Esophagus squamous epithelium (tissue), 5 donors: ENCODE measurements at regions of chr6 and their contacts with region 1.

Region 1: DNA sequence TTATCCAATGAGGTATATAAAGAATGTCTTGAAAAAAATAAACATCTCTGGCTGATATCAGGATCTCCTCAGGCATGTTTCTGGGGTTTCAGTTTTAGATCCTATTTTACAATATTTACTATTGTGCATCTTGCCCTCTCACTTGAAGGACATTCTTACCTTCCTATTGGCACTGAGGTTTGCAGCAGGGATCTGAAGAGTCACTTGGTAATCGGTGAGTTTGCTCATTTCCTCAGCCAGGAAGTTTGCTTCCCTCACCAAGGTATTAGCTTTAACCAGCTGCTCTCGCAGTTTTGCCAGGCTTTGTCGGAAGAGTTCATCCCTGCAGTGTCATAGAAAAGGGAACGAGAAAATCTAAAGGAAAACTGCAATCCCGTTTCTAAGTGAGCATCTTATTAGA is 101.9 kb upstream of the NUP153 start:
- DNase-seq: no peak
- H3K4me3 ChIP-seq: no peak overlapping the region
- H3K27ac ChIP-seq: no peak overlapping the region
- H3K4me1 ChIP-seq: no peaks in the 10 kb centered on the region
- H3K27me3 ChIP-seq: no peaks in the 10 kb centered on the region
- CTCF ChIP-seq: no peak
- POLR2A ChIP-seq: no peak

Region 2: GRCh38 chr6:17178754-17179529 is 629.7 kb before region 1 on chr6:
- intact Hi-C with region 1: loop called (anchors 10 kb)
- DNase-seq: no peak
- H3K4me3 ChIP-seq: no peak overlapping the region
- H3K27ac ChIP-seq: no peak overlapping the region
- H3K4me1 ChIP-seq: no peaks in the 10 kb centered on the region
- H3K27me3 ChIP-seq: no peaks in the 10 kb centered on the region
- CTCF ChIP-seq: no peak
- POLR2A ChIP-seq: no peak

Region 3: DNA sequence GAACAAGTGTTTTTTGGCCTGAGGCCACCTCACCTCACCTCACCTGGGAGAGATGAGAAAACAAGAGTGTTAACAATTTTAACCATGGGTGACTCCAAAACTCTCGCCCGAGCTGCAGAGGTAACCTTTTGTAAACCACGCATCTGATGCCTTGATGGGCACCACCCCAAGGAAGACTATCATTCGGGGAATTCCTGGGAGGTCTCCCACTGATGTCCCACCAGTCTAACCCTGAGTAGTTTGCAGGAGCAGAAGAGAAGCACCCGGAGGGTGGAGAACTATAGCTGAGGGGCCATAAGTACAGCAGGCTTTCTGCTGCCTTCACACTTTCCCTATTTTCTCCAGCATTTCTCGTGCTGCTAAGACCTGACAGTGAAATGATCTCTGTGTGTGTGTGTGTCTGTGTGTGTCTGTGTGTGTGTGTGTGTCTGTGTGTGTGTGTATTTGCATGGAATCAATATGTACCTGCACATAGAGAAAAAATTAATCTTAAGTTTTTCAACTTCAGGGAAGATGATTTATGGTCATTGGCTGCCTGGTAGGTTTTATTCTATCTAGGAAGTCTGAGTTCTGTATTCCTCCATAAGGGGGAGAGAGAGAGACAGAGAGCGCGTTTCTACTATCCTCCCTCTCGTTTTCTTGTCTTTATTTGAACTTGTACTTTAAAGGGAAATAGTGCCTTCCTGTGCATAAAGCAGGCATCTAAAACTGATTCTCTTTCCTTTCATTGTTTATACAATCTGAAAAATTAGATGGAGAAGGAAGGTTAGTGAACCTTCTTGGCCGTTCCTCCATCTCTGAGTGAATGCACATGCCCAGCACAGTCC is 339.4 kb before region 1 on chr6:
- intact Hi-C with region 1: no loop called
- DNase-seq: no peak
- H3K4me3 ChIP-seq: peak overlapping the region in 1 of 4 donors; percentile 14
- H3K27ac ChIP-seq: peak overlapping the region in 3 of 4 donors; percentile 55 to 78 (median 69)
- H3K4me1 ChIP-seq: peaks cover 3 to 40% (median 7%) of the 10 kb centered on the region in 3 donors
- H3K27me3 ChIP-seq: no peaks in the 10 kb centered on the region
- CTCF ChIP-seq: peak in 4 of 6 experiments; percentile 20 to 36 (median 30)
- POLR2A ChIP-seq: no peak

Region 4: DNA sequence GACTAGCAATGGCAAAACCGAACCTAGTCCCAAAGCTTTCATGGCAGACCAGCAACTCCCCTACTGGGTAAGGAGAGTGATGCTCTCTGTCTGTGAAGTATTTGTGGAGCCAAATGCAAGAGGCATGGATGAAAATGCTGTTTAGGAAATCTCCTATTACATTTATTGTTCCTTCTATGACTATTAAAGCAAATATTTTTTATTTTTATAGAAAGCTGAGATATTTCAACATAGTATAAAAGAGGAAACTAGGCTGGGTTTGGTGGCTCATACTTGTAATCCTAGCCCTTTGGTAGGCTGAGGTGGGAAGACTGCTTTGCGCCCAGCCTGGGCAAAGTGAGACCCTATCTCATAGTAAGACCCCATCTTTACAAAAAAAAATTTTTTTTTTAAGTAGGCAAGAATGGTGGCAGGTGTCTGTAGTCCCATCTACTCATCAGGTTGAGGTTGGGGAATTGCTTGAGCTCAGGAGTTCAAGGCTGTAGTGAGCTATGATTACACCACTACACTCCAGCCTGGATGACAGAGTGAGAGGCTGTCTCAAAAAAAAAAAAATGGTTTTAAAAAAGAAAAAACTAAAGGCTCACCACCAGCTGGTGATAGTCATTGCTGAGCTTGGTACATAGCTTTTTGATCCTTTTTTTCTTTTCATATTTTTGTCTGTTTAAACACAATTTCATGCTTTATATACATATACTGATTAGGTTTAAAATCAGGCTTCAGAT is 357.9 kb after region 1 on chr6:
- intact Hi-C with region 1: no loop called
- DNase-seq: no peak
- H3K4me3 ChIP-seq: no peak overlapping the region
- H3K27ac ChIP-seq: no peak overlapping the region
- H3K4me1 ChIP-seq: peaks cover 0 to 3% (median 0%) of the 10 kb centered on the region in 3 donors
- H3K27me3 ChIP-seq: no peaks in the 10 kb centered on the region
- CTCF ChIP-seq: no peak
- POLR2A ChIP-seq: no peak